SK-N-SH (cell line): ENCODE measurements at regions of chr15 and their contacts with region 1.

Region 1: GRCh38 chr15:45037936-45038335 is 14.9 kb downstream of the SORD start:
- DNase-seq: no peak
- H3K4me3 ChIP-seq: no peak overlapping the region
- H3K27ac ChIP-seq: no peak overlapping the region
- H3K4me1 ChIP-seq: no peaks in the 10 kb centered on the region; a peak in 1 of 4 replicates
- H3K27me3 ChIP-seq: no peaks in the 10 kb centered on the region
- CTCF ChIP-seq: no peak
- EP300 ChIP-seq: no peak
- RAD21 ChIP-seq: no peak

Region 2: DNA sequence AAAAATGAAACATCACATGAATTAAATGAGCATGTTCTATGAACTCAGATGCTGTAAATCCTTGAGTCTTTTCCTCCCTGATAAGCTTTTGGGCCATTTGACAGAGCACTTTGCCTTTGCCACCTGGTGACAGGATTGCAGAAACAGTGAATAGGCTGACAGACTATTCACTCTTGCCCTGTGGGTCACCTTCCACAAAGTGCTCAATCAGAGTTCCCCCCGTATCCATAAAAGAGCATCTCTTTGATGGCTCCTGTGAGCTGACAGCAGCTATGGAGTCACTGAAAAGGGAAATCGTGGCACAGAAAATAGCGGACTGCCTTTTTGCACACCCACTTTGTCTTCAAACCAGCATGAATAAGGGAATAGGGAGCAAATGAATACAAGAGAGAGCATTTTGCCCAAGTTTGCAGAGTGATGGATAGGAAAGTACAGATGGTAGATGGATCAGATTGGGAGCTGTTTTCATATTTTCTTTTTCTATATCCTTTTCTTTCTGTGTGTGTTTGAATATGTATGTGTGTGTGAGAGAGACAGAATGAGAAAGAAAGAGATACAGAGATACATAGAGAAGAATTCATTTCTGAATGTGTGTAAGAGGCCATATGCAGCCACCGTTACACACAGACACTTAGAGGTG is 787.2 kb before region 1 on chr15:
- CTCF ChIA-PET with region 1: no interaction called
- POLR2A ChIA-PET with region 1: no interaction called
- DNase-seq: no peak
- H3K4me3 ChIP-seq: no peak overlapping the region
- H3K27ac ChIP-seq: no peak overlapping the region
- H3K4me1 ChIP-seq: no peaks in the 10 kb centered on the region
- H3K27me3 ChIP-seq: no peaks in the 10 kb centered on the region
- CTCF ChIP-seq: no peak
- EP300 ChIP-seq: no peak
- RAD21 ChIP-seq: no peak

Region 3: DNA sequence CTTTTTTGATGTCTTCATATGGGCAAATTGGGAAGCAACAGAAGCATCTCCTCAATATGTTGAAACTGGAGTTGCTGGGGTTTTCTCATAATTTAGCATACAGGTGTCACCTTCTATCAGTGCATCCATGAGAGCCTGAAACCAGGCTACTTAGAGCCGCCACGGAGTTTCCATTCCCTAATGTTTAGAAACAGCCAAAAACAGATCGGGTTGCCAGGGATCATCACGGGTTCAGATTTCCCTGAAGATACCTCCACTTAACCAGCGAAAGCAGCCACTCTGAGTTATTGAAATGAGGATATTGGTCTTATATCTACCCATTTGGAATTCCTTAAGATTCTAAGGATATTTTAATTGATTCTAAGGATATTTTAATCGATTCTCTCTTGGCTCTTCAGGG is 66.9 kb before region 1 on chr15:
- CTCF ChIA-PET with region 1: interaction called, 11 read pairs
- POLR2A ChIA-PET with region 1: no interaction called
- DNase-seq: no peak
- H3K4me3 ChIP-seq: no peak overlapping the region
- H3K27ac ChIP-seq: no peak overlapping the region
- H3K4me1 ChIP-seq: no peaks in the 10 kb centered on the region
- H3K27me3 ChIP-seq: no peaks in the 10 kb centered on the region; the same call in 1 of the 2 replicates
- CTCF ChIP-seq: no peak
- EP300 ChIP-seq: no peak
- RAD21 ChIP-seq: no peak

Region 4: GRCh38 chr15:45022871-45023658 is 14.9 kb before region 1 on chr15 and contains the start of gene SORD:
- CTCF ChIA-PET with region 1: interaction called, 12 read pairs
- POLR2A ChIA-PET with region 1: no interaction called
- DNase-seq: peak; percentile 99
- H3K4me3 ChIP-seq: peak within 1 kb of the TSS; percentile 74 to 80
- H3K27ac ChIP-seq: peak within 1 kb of the TSS; percentile 31 to 72; a peak in 3 of 4 replicates
- H3K4me1 ChIP-seq: peaks cover 0 to 27% of the 10 kb centered on the region in 2 experiments; a peak in 3 of 4 replicates
- H3K27me3 ChIP-seq: peaks cover 11% of the 10 kb centered on the region; the same call in 1 of the 2 replicates
- CTCF ChIP-seq: no peak
- EP300 ChIP-seq: 0 out of 4 replicates have a peak, but pooled peaks of 1 of the 2 experiments have one; percentile 21
- RAD21 ChIP-seq: no peak
- polyA plus RNA-seq, gene SORD: 35.1 and 40.8 TPM in 2 replicates

Region 5: GRCh38 chr15:45276831-45277230 is 238.9 kb after region 1 on chr15:
- CTCF ChIA-PET with region 1: no interaction called
- POLR2A ChIA-PET with region 1: no interaction called
- DNase-seq: peak; percentile 55
- H3K4me3 ChIP-seq: no peak overlapping the region
- H3K27ac ChIP-seq: no peak overlapping the region
- H3K4me1 ChIP-seq: peaks cover 0 to 10% of the 10 kb centered on the region in 2 experiments; a peak in 2 of 4 replicates
- H3K27me3 ChIP-seq: no peaks in the 10 kb centered on the region
- CTCF ChIP-seq: peak; percentile 58
- EP300 ChIP-seq: no peak
- RAD21 ChIP-seq: peak; percentile 79